GM18951 (cell line): ENCODE measurements at regions of chr1 and their contacts with region 1.

Region 1: DNA sequence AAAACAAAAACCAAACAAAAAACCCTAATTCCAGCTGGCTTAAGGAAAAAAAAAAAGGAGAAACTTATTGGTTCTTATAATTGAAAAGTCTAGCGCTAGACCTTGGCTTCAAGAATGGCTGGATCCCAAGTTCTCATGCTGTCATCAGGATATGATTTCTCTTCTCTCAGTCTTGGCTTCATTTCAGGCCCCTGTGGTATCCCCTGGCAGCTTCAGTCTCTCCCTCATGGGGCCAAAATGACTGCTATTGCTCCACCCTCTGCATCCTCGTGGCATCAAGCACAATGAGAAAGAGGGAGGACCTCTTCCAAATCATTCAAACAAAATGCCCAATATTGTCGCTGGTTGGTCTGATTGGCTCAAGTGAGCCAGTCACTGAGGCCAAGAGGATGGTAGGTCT is 80.7 kb downstream of the GIPC2 start:
- POLR2A ChIP-seq: no peak

Region 2: GRCh38 chr1:78688701-78689100 is 562.2 kb after region 1 on chr1:
- in situ Hi-C with region 1: loop called (anchors 10 kb)
- POLR2A ChIP-seq: no peak